Transverse colon (tissue), 4 donors: ENCODE measurements at regions of chr2 and their contacts with region 1.

Region 1: DNA sequence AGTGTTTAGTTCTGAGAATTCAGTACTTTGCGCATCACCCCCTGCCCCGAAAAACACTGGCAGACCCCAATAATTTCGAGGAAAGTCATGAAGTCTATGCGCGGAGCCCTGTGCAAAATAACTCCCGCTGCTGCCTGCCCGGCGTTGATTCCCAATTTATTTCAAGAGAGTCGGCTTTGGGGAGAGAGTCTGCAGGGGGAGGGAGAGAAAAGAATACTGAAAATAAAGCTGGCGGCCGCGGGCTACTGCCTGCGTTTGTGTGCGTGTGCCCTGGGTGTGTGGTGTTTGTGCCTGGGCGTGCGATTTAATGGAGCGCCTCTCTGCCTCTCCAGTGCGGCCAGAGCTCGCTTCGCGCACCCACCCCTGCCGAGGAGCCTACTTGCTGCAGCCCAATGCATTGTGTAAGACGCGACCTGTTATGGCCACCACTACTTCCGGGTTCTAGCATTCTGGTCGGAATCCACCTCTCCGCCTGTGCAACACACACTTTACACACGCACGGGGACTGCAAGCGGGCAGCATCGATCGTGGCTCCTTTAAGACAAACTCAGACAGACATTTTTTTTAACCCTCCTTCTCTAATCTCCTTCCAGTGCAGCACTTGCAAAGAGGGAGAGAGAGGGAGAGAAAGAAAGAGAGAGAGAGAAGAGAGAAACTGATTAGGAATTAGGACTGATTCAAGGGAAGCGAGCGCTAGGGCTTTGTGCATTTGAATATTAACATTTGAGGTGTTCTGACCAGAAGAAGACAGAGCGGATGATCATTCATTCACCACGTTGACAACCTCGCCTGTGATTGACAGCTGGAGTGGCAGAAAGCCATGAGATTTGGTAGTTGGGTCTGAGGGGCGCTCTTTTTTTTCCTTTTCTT is at the start of gene MEIS1:
- DNase-seq: peak; percentile 80
- H3K4me3 ChIP-seq: peak within 1 kb of the TSS; percentile 48 to 73 (median 68)
- H3K27ac ChIP-seq: peak within 1 kb of the TSS; percentile 91 to 96 (median 93)
- H3K4me1 ChIP-seq: peaks cover 0 to 38% (median 14%) of the 10 kb centered on the region in 4 donors
- H3K27me3 ChIP-seq: peaks cover 97% of the 10 kb centered on the region
- CTCF ChIP-seq: no peak
- EP300 ChIP-seq: no peak
- POLR2A ChIP-seq: peak; percentile 86
- total RNA-seq, gene MEIS1: 25.9 to 129 (median 28.8) TPM

Region 2: GRCh38 chr2:66305718-66306117 is 129.2 kb before region 1 on chr2:
- in situ Hi-C with region 1: no loop called
- intact Hi-C with region 1: no loop called
- DNase-seq: peak; percentile 30
- H3K4me3 ChIP-seq: no peak overlapping the region
- H3K27ac ChIP-seq: peak overlapping the region in 2 of 4 donors; percentile 37 to 44
- H3K4me1 ChIP-seq: peaks cover 0 to 7% (median 0%) of the 10 kb centered on the region in 4 donors
- H3K27me3 ChIP-seq: no peaks in the 10 kb centered on the region
- CTCF ChIP-seq: no peak
- EP300 ChIP-seq: no peak
- POLR2A ChIP-seq: no peak

Region 3: DNA sequence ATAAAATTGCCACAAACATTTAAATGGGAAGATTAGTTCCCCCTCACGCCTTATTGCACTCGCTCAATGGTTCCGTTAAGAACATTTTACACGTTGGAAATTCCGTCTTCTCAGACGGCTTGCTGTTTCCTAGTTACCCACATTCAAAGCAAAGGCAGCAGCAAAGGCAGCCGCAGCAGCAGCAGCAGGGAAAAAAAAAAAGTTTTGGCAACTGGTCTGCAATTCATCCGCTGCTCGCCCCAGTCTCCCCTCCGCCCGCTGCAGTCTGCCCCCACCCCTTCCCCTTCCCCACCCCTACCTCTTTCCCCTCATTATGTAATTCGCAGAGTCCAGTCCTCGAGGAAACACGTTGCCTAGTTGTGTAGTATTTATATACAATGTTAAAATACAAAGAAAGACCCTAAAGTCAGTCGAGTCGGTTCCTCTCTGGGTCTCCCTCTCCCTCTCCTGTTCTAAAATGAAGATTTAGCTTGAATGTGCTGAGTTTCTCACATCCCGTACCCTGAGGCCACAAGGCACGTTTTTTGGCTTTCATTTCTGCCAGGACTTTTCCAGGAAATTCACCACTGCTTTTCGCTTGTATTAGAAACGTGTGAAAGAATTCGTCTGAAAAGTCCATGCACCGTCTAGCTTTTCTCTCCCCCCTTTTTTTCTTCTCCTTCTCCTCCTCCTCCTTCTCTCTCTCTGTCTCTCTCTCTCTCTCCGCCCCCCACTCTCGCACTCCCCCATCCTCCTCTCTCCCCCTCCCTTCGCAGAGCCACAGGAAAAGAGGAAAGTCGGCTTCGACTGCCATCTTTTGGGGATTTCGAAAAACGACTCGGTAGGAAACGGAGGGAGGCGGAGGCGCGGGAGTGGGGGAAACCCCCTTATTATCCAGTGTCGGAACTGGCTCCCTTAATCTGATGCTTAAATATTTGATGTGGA is 140.0 kb after region 1 on chr2:
- in situ Hi-C with region 1: loop called in 1 of 4 experiments (anchors 5 kb)
- intact Hi-C with region 1: loop called (anchors 2 kb)
- DNase-seq: peak; percentile 44
- H3K4me3 ChIP-seq: peak overlapping the region; percentile 34 to 65 (median 46)
- H3K27ac ChIP-seq: peak overlapping the region; percentile 79 to 96 (median 90)
- H3K4me1 ChIP-seq: peaks cover 0 to 33% (median 9%) of the 10 kb centered on the region in 4 donors
- H3K27me3 ChIP-seq: peaks cover 70% of the 10 kb centered on the region
- CTCF ChIP-seq: peak in 4 of 5 experiments; percentile 15 to 34 (median 26)
- EP300 ChIP-seq: no peak
- POLR2A ChIP-seq: no peak

Region 4: GRCh38 chr2:66748939-66749338 is 314.0 kb after region 1 on chr2:
- in situ Hi-C with region 1: no loop called
- intact Hi-C with region 1: no loop called
- DNase-seq: no peak
- H3K4me3 ChIP-seq: no peak overlapping the region
- H3K27ac ChIP-seq: peak overlapping the region in 3 of 4 donors; percentile 44 to 58 (median 57)
- H3K4me1 ChIP-seq: peaks cover 0 to 7% (median 2%) of the 10 kb centered on the region in 4 donors
- H3K27me3 ChIP-seq: no peaks in the 10 kb centered on the region
- CTCF ChIP-seq: no peak
- EP300 ChIP-seq: no peak
- POLR2A ChIP-seq: no peak

Region 5: DNA sequence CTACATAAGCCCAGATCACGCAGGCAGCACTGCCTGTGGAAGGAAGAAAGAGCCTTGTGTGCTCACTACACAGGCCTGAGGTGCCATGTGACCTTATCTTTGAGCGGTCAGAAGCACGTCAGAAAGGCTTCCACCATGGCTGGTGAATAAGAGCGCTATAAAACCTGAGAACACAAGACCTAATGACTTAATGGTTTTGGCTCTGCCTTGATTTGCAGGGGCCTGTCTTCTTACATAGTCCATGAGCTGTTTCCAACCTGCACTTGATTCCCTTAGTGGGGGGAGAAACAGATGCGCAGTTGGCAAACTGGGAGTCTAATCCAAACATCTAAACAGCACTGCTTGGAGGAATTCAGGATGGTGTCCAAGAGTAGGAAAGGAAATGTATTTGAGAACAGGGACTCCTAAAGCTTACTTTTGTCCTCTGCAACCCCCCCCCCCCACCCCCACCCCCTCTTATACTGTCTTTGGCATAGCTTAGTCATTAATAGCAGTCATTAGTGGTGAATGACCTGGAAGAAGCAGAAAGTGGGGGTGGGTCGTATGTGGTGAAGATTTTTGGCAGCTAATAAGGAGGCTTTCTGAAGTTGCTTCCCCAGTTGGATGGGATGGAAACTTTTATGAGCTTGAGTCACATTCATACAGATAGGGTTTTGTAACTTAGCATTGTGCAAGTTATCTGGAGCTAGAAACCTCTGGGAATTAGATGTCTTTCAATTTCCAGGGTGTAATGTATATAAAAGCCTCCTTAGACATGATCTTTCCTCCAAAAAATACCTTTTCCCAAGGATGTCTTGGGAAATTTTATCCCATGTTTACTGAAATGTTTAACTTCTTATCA is 454.1 kb after region 1 on chr2:
- in situ Hi-C with region 1: loop called in 1 of 4 experiments (anchors 25 kb)
- intact Hi-C with region 1: loop called (anchors 10 kb)
- DNase-seq: peak; percentile 50
- H3K4me3 ChIP-seq: no peak overlapping the region
- H3K27ac ChIP-seq: peak overlapping the region; percentile 70 to 86 (median 77)
- H3K4me1 ChIP-seq: peaks cover 0 to 4% (median 0%) of the 10 kb centered on the region in 4 donors
- H3K27me3 ChIP-seq: no peaks in the 10 kb centered on the region
- CTCF ChIP-seq: no peak
- EP300 ChIP-seq: peak; percentile 95
- POLR2A ChIP-seq: no peak

Region 6: DNA sequence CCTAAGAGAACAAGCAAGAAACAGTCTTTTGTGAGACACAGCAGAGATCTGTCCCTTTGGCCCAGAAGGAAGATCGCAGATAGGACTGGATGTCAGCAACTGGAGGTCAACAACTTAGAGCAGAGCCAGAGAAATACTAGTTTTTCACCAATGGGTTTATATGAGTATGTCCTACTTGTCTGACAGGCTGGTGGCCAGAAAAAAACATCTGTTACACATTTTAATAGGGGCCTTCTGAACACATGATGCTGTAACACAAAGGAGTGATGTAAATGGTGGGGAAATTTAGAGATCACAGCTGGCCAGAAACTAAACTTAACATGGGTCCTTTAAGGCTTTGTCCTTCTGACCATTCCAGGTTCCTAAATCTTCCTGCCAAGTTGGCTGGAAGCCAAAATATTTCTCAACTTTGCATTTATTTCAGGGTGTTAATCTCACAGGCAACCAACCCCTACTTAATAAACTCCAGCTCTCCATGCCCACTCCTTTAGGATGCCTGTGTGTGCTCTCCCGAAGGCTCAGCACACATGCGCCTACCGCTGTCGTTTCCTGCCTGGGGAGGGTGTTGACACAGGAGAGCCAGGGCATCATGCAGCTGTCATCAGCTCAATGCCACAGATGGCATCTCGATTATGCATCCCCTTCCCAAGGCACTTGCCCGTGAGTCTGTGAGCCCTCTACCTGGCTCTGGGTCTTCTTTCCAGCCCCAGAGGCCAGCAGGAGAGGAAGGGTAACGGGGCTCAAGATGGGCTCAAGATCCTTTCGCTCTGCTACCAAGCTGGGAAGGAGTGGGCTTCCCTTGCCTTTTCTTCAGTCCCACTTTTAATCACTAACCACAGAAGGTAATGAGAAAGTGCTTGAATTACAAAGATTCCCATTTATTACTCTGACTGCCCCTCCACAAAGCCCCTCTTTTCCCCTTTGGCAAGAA is 1214.7 kb after region 1 on chr2:
- in situ Hi-C with region 1: no loop called
- intact Hi-C with region 1: loop called (anchors 10 kb)
- DNase-seq: no peak
- H3K4me3 ChIP-seq: no peak overlapping the region
- H3K27ac ChIP-seq: peak overlapping the region; percentile 73 to 83 (median 78)
- H3K4me1 ChIP-seq: peaks cover 2 to 30% (median 13%) of the 10 kb centered on the region in 4 donors
- H3K27me3 ChIP-seq: no peaks in the 10 kb centered on the region
- CTCF ChIP-seq: no peak
- EP300 ChIP-seq: peak; percentile 50
- POLR2A ChIP-seq: no peak

Region 7: GRCh38 chr2:67993329-67993728 is 1558.4 kb after region 1 on chr2:
- in situ Hi-C with region 1: no loop called
- intact Hi-C with region 1: no loop called
- DNase-seq: no peak
- H3K4me3 ChIP-seq: no peak overlapping the region
- H3K27ac ChIP-seq: no peak overlapping the region
- H3K4me1 ChIP-seq: no peaks in the 10 kb centered on the region
- H3K27me3 ChIP-seq: no peaks in the 10 kb centered on the region
- CTCF ChIP-seq: no peak
- EP300 ChIP-seq: no peak
- POLR2A ChIP-seq: no peak

Region 8: DNA sequence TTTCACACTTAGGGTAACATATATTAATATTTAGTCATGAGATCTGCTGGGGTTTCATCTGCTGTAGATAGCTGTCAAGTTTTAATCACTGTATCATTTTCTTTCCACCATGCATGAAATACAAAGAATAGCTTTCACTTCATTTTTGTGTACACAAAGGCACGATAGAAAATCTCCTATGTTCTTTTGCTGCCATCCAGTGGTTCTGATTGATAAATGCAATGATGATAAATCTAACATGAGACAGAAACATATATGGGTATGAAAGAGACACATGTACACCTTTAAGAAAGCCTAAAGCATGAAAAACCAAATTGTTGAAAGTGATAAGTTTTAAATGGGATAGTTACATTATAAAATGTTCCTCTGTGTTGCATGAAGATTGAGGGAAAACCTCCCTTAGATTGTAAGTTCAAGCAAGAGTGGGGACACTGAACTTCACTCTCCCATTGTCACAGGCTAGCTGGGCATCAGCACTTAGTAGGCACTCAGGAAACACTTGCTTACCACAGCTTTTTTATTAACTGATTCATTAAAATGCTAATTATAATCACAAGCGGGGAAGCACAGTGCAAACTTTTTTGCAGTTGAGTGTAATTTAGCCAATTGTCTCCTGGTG is 1596.7 kb after region 1 on chr2:
- in situ Hi-C with region 1: loop called in 1 of 4 experiments (anchors 25 kb)
- intact Hi-C with region 1: no loop called
- DNase-seq: no peak
- H3K4me3 ChIP-seq: no peak overlapping the region
- H3K27ac ChIP-seq: no peak overlapping the region
- H3K4me1 ChIP-seq: peaks cover 0 to 6% (median 0%) of the 10 kb centered on the region in 4 donors
- H3K27me3 ChIP-seq: no peaks in the 10 kb centered on the region
- CTCF ChIP-seq: peak; percentile 54 to 61 (median 59)
- EP300 ChIP-seq: no peak
- POLR2A ChIP-seq: no peak